WTC11 (cell line): ENCODE measurements at regions of chr4 and their contacts with region 1.

Region 1: DNA sequence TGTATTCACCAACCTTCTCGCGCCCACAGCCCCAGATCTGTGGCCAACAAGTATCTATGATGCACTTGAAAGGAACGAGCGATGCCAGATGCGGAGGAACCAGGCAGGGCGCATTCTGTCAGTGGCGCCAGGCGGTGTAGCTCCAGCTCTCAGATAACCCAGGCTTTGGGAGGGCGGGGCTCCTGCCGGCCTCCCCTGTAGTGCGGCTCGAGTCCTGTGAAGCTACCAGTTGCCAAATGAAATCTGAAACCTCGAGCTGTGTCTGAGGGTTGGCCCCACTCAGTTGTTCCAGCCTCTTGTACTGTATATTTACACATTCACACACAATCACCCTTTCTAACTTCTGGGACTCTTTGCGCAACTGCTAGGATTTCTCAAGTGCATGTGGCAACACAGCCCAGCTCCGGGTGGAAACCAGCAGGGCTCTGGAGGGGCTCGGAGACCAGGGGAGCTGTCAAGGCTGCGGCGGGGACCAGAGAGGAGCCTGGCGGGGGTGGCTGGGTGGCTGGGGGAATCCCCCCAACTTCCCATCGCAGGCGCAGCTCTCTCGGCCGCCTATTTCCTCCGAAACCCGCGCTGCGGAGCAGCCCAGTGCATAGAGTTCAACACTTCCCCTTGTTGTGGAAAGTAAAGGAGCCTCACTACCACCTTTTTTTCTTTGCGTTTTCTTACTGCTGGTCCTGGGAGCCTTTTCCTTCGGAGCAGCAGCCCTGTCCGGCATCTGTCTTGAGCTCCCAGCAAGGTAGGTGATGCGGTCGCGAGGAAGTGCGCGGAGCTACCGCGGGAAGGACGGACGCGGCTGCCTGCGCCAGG is at the start of gene ARHGAP24:
- DNase-seq: peak; percentile 87
- ATAC-seq: peak; percentile 95
- H3K4me3 Mint-ChIP-seq: peak within 1 kb of the TSS; percentile 85
- H3K27ac Mint-ChIP-seq: peak within 1 kb of the TSS; percentile 95
- H3K4me1 Mint-ChIP-seq: peaks cover 8% of the 10 kb centered on the region
- H3K27me3 Mint-ChIP-seq: peaks cover 7% of the 10 kb centered on the region
- CTCF ChIP-seq: no peak
- total RNA-seq, gene ARHGAP24: 1.2 to 2.1 TPM (median 1.4 TPM) in 3 replicates

Region 2: GRCh38 chr4:85298037-85298436 is 177.0 kb before region 1 on chr4:
- CTCF ChIA-PET with region 1: no interaction called
- POLR2A ChIA-PET with region 1: no interaction called
- DNase-seq: no peak
- ATAC-seq: no peak
- H3K4me3 Mint-ChIP-seq: no peak overlapping the region
- H3K27ac Mint-ChIP-seq: no peak overlapping the region
- H3K4me1 Mint-ChIP-seq: peaks cover 13% of the 10 kb centered on the region
- H3K27me3 Mint-ChIP-seq: no peaks in the 10 kb centered on the region
- CTCF ChIP-seq: no peak

Region 3: DNA sequence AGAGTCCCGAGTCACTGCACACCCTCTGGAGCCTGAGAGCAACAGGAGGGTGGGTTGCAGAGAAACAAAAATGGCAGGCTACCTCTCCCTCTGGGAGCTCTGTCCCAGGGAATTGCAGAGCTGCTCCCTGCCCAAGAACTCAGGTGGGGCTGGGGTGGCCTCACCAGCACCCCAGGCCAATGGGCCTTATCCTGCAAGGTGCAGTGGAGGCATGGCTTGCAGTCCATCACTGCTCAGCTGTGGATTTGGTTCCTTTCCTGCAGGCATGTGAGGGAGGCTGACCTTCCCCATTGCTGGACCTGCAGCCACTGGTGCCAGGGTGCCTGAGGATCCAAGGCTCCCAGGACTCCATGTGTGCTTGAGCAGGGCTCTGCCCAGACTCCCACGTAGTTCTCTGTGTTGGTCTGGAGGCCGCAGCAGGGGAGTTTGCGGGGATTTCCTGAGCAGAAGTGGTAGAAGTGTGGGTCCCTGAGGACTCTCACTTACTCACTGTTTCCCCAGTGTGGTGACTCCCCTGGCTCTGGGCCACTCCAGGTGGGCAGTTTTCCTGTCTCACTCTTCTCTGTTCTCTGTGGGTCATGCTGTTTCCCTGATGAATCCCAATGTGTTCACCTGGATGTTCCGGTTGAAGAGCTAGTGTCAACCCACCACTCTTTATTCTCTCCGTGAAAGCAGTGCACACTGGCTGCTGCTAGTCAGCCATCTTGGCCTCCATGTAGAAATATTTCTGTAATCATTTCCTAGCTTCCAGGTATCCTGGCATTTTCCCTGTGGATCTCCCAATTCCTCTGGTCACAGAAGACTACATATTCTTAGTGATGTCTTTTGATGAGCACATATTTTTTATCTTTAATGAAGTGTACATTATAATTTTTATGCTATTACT is 82.2 kb after region 1 on chr4:
- CTCF ChIA-PET with region 1: no interaction called
- POLR2A ChIA-PET with region 1: no interaction called
- DNase-seq: no peak
- ATAC-seq: no peak
- H3K4me3 Mint-ChIP-seq: no peak overlapping the region
- H3K27ac Mint-ChIP-seq: no peak overlapping the region
- H3K4me1 Mint-ChIP-seq: no peaks in the 10 kb centered on the region
- H3K27me3 Mint-ChIP-seq: no peaks in the 10 kb centered on the region
- CTCF ChIP-seq: no peak

Region 4: DNA sequence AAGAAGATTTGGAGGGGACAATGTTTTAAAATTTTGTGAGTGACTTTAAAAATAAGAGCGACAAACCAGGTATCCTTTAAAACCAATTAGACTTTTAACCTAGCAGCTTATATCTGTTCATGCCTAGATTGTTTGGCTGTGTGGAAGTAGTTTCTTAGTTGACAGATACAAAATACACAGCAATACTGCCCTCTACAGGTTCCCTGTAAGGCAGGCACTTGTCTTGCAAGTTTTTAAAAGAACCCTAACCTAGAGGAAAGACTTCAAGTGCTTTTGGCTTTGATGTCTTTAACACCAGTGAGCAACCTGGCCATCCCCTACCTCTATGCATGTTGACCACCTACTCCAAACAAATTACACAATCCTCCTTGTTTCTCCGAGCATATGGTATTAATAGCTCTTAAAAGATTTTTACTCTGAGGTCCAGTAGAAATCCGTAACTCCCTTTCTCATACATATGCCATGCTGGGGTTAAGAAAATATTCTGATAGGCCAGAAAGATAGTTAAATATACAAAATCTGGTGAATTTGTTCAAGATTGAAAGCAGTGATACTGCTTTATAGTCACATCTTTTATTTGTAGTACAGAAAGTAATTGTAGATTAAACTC is 273.0 kb after region 1 on chr4:
- CTCF ChIA-PET with region 1: interaction called, 10 read pairs
- POLR2A ChIA-PET with region 1: no interaction called
- DNase-seq: peak; percentile 19
- ATAC-seq: peak; percentile 80
- H3K4me3 Mint-ChIP-seq: no peak overlapping the region
- H3K27ac Mint-ChIP-seq: no peak overlapping the region
- H3K4me1 Mint-ChIP-seq: peaks cover 14% of the 10 kb centered on the region
- H3K27me3 Mint-ChIP-seq: no peaks in the 10 kb centered on the region
- CTCF ChIP-seq: peak; percentile 56

Region 5: DNA sequence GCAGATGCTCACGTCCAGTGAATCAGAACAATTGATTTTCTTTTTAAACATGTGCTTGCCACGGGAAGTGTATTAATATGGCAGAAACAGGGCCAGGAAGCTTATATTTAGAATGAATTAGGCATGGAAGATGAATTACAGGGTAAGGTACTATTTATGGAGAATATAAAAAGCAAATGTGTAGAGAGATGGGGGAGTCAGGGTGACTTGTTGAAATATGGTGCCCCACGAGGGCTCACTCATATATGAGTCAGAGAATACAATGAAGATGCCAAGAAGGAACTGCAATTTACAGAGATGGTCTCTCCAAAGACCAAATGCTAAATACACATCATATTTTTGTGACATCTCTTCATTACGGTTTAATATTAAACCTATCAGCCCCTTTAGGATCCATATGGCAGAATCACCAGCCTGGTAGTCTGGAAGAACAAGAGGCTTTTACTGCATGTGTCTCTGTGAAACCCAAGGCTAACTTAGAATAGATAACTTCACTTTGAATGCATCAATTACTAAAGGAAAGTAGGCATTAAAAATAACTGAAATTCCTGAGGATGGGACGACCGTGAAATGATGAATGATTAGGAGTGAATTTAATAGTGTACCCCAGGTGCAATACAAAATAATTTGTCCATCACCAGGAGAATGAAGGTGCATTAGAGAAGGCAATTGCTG is 385.2 kb after region 1 on chr4:
- CTCF ChIA-PET with region 1: no interaction called
- POLR2A ChIA-PET with region 1: no interaction called
- DNase-seq: no peak
- ATAC-seq: no peak
- H3K4me3 Mint-ChIP-seq: no peak overlapping the region
- H3K27ac Mint-ChIP-seq: no peak overlapping the region
- H3K4me1 Mint-ChIP-seq: peaks cover 7% of the 10 kb centered on the region; the same call in 1 of the 2 replicates
- H3K27me3 Mint-ChIP-seq: no peaks in the 10 kb centered on the region
- CTCF ChIP-seq: no peak